Mammary epithelial cell (primary cell): ENCODE measurements at regions of chr20 and their contacts with region 1.

Region 1: DNA sequence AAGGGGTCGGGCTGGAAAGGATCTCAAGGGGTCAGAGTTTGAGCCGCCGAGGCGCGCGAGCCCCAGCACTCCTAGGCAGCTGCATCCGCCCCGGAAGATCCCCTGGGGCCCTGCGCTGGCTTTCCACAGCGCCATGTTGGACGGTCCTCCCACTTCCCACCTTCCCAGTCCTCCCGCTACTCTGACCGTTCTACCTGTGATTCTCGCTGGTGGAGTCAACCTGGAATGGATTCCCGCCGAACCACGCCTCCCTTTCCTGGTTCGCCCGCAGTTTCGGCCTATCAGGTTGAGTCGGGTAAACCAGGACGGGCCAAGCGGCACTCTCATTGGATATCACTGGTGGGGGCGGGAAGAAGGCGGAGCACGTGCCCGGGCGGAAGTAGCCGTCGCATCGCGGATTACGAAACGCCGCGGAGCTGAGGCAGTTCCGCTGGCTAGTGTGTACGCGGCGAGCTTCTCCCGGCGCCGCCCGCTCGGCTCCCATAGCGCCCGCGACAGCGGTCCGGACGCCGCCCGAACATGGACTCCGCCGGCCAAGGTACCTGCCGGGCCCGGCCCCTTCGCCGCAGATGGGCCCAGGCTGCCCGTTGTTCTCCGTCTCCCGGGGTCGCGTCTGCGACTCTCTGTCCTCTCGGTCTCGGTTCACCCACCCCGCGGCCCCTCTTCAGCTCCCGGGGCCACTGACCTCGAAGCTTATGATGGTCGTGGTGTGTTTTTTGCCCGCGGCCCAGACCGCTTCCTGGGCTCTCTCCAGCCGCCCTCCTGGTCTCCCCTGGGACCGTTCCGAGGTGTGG is at the start of gene TPD52L2:
- DNase-seq: peak; percentile 100
- H3K4me3 ChIP-seq: peak within 1 kb of the TSS; percentile 85 to 94 (median 92)
- H3K27ac ChIP-seq: peak within 1 kb of the TSS; percentile 95
- H3K4me1 ChIP-seq: peaks cover 12% of the 10 kb centered on the region
- H3K27me3 ChIP-seq: no peaks in the 10 kb centered on the region
- CTCF ChIP-seq: no peak
- total RNA-seq, gene TPD52L2: 122 to 150 TPM

Region 2: DNA sequence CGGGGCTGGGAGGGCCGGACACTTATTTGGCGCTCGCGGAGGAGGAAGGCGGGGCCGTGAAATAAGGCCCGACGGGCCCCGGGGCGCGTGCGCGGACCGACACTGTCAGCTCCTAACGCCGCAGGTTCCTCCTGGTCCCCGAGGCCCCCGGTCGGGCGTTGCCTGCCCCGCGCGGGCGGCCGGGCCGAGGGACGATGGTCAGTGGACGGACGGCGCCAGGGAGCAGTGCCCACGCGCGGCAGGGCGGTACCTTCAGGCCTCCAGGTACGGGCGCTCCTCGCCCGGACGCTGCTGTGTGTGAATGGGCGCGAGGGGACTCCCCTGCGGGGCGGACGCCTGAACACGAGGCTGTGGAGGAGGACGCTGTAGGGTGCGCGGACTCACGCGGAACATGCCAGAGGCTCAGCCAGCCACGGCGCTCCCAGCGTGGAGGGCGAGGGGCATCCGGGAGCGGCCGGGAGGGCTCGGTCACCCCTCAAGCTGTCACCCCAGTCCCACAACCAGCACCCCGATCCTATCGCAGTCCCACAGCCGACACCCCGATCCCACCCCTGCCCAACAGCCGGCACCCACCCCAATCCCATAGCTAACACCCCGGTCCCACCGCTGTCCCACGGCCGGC is 237.8 kb before region 1 on chr20:
- CTCF ChIA-PET with region 1: no interaction called
- dilution Hi-C with region 1: no loop called
- in situ Hi-C with region 1: no loop called
- intact Hi-C with region 1: loop called (anchors 10 kb)
- DNase-seq: peak; percentile 94
- H3K4me3 ChIP-seq: peak overlapping the region; percentile 93 to 99 (median 97)
- H3K27ac ChIP-seq: peak overlapping the region; percentile 62
- H3K4me1 ChIP-seq: peaks cover 11% of the 10 kb centered on the region
- H3K27me3 ChIP-seq: no peaks in the 10 kb centered on the region
- CTCF ChIP-seq: no peak

Region 3: GRCh38 chr20:63698739-63699465 is 166.1 kb before region 1 on chr20:
- CTCF ChIA-PET with region 1: no interaction called
- dilution Hi-C with region 1: loop called (anchors 5 kb)
- in situ Hi-C with region 1: loop called in 1 of 2 experiments (anchors 10 kb)
- intact Hi-C with region 1: loop called (anchors 2 kb)
- DNase-seq: peak; percentile 94
- H3K4me3 ChIP-seq: peak overlapping the region; percentile 47 to 72 (median 47)
- H3K27ac ChIP-seq: peak overlapping the region; percentile 60
- H3K4me1 ChIP-seq: peaks cover 72% of the 10 kb centered on the region
- H3K27me3 ChIP-seq: no peaks in the 10 kb centered on the region
- CTCF ChIP-seq: no peak

Region 4: GRCh38 chr20:63785691-63786131 is 79.3 kb before region 1 on chr20:
- CTCF ChIA-PET with region 1: no interaction called
- dilution Hi-C with region 1: no loop called
- in situ Hi-C with region 1: no loop called
- intact Hi-C with region 1: loop called (anchors 1 kb)
- DNase-seq: no peak
- H3K4me3 ChIP-seq: no peak overlapping the region
- H3K27ac ChIP-seq: no peak overlapping the region
- H3K4me1 ChIP-seq: no peaks in the 10 kb centered on the region
- H3K27me3 ChIP-seq: no peaks in the 10 kb centered on the region
- CTCF ChIP-seq: no peak

Region 5: DNA sequence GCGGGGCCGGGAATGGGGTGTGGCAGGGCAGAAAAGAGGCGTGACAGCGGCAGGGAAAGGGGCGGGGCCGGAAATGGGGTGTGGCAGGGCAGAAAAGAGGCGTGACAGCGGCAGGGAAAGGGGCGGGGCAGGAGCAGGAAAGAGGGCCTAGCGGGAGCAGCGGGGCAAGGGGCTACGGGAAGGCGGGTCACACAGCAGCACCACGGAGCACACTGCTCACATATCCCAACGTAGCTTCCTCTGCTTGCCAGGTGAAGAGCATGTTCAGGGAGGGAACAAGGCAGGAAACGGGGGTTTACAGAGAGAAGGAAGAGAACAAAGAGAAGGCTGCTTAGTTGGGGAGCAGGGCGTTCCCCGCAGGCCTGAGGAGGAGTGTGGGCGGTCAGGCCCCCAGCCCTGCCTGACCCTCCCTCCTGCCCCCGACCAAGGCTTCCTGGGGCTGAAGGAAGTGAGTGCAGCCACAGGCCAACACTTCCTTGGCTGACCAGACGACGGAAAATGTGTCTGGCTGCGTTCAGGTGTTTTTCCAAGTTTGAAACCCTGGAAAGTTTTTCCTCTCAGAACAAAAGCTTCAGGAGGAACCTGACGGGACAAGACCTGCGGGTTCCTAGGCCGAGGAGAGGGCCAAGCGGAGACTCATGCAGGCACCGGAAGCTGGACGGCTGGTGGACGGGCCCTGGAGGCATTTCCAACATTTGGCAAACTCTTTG is 77.4 kb after region 1 on chr20:
- CTCF ChIA-PET with region 1: no interaction called
- dilution Hi-C with region 1: loop called (anchors 5 kb)
- in situ Hi-C with region 1: no loop called
- intact Hi-C with region 1: no loop called
- DNase-seq: peak; percentile 79
- H3K4me3 ChIP-seq: peak overlapping the region in 2 of 3 experiments; percentile 5 to 29
- H3K27ac ChIP-seq: peak overlapping the region; percentile 69
- H3K4me1 ChIP-seq: peaks cover 32% of the 10 kb centered on the region
- H3K27me3 ChIP-seq: no peaks in the 10 kb centered on the region
- CTCF ChIP-seq: no peak